ENCODE measurements at regions of chr11 and their contacts with region 1.

Region 1: DNA sequence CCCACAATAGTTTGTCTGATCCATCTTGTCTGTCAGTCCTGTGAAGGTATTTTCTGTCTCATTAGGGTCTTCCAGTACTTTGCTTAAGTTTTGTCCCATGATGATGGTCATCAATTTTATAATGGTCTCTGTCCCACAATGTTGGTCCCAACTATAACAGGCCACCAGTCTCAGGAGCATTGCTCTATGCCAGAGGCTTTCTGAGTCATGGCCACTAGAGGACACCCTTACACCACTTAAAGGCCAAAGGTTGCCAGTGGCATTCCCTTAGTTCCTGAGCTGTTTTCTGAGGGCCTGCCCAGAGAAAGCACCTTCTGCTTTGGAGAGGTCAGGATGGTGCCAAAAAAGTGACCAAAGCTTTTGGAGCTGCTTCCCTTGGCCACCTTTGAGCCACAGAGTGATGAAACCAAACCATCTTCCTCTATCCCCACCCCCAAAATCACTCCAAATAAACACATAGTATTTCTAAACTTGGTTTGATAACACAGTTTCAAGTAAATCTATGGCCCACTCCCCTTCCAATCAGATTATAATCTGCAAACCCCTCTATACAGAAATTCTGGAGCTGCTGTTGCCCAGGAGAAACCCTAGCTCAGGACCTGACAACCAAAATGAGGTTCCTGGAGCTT is 19.3 kb downstream of the EIF3F start:
- DNase-seq: peak; percentile 58
- ATAC-seq: peak; percentile 84
- H3K4me3 Mint-ChIP-seq: no peak overlapping the region
- H3K27ac Mint-ChIP-seq: no peak overlapping the region
- H3K4me1 Mint-ChIP-seq: peaks cover 2% of the 10 kb centered on the region
- H3K27me3 Mint-ChIP-seq: peaks cover 6% of the 10 kb centered on the region
- CTCF ChIP-seq: peak; percentile 83

Region 2: GRCh38 chr11:7986768-7987559 is 19.5 kb before region 1 on chr11 and contains the start of gene EIF3F:
- CTCF ChIA-PET with region 1: interaction called, 15 read pairs
- POLR2A ChIA-PET with region 1: interaction called, 3 read pairs
- intact Hi-C with region 1: no loop called
- DNase-seq: peak; percentile 94
- ATAC-seq: peak; percentile 97
- H3K4me3 Mint-ChIP-seq: peak within 1 kb of the TSS; percentile 93
- H3K27ac Mint-ChIP-seq: peak within 1 kb of the TSS; percentile 98
- H3K4me1 Mint-ChIP-seq: peaks cover 39% of the 10 kb centered on the region
- H3K27me3 Mint-ChIP-seq: no peaks in the 10 kb centered on the region
- CTCF ChIP-seq: peak; percentile 71
- total RNA-seq, gene EIF3F: 303 to 309 TPM

Region 3: GRCh38 chr11:8023831-8024555 is 17.5 kb after region 1 on chr11:
- CTCF ChIA-PET with region 1: interaction called, 12 read pairs
- POLR2A ChIA-PET with region 1: interaction called, 3 read pairs
- intact Hi-C with region 1: no loop called
- DNase-seq: no peak
- ATAC-seq: no peak
- H3K4me3 Mint-ChIP-seq: no peak overlapping the region
- H3K27ac Mint-ChIP-seq: no peak overlapping the region
- H3K4me1 Mint-ChIP-seq: peaks cover 7% of the 10 kb centered on the region
- H3K27me3 Mint-ChIP-seq: peaks cover 15% of the 10 kb centered on the region
- CTCF ChIP-seq: no peak

Region 4: GRCh38 chr11:8070417-8071115 is 64.1 kb after region 1 on chr11:
- CTCF ChIA-PET with region 1: interaction called, 12 read pairs
- POLR2A ChIA-PET with region 1: no interaction called
- intact Hi-C with region 1: no loop called
- DNase-seq: no peak
- ATAC-seq: peak; percentile 66
- H3K4me3 Mint-ChIP-seq: no peak overlapping the region
- H3K27ac Mint-ChIP-seq: no peak overlapping the region
- H3K4me1 Mint-ChIP-seq: no peaks in the 10 kb centered on the region
- H3K27me3 Mint-ChIP-seq: peaks cover 8% of the 10 kb centered on the region
- CTCF ChIP-seq: peak; percentile 56

Region 5: DNA sequence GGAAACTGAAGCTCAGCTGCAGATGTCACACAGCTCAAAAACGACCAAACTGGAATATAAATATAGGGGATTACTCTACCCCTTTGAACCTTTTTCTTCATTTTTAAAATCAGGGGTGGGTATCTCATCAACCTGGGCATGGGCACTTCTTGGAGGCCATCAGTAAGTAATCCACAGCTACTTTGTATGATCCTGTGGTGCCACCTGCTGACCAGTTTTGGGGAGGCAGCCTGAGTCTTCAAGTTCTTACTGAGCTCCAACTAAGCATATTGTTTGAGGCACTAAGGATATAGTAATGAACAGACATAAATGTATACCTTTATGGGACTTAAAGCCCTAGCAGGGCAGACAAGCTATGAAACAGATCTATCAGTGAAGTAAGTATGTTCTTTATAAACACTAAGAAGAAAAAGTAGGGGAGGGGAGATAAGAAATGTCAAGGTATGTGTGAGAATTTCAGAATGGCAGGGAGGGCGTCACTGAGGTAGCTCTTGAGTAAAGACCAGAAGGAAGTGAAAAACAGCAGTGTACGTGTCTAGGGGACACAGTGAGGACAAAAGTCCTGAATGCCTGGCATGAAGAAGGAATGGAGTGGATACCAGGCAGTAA is 92.9 kb after region 1 on chr11:
- CTCF ChIA-PET with region 1: interaction called, 161 read pairs
- POLR2A ChIA-PET with region 1: no interaction called
- intact Hi-C with region 1: loop called (anchors 2 kb)
- DNase-seq: peak; percentile 88
- ATAC-seq: peak; percentile 69
- H3K4me3 Mint-ChIP-seq: no peak overlapping the region
- H3K27ac Mint-ChIP-seq: no peak overlapping the region
- H3K4me1 Mint-ChIP-seq: no peaks in the 10 kb centered on the region
- H3K27me3 Mint-ChIP-seq: no peaks in the 10 kb centered on the region
- CTCF ChIP-seq: peak; percentile 74